ENCODE measurements at regions of chr12 and their contacts with region 1.

Region 1: DNA sequence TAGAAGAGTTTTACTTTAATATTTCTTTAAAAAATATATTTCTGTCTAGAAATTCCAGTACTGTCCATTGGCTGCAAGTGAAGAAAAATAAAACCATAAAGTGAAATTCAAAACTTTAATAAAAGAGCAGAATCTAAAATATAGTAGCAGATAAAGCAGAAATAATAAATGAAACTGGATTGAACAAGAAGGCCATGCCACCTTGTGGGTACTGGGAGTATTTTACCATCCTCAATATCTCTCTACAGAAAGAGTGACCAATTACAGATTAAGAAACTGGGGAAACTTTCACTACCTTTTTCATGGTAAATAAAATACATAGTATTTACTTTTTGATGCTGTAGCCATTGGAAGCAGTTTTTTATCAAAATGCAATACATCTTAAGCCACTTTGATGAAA is 220.5 kb downstream of the BCAT1 start:
- DNase-seq: no peak
- H3K4me3 Mint-ChIP-seq: no peak overlapping the region
- H3K27ac Mint-ChIP-seq: no peak overlapping the region
- H3K4me1 Mint-ChIP-seq: peaks cover 19% of the 10 kb centered on the region
- H3K27me3 Mint-ChIP-seq: no peaks in the 10 kb centered on the region

Region 2: DNA sequence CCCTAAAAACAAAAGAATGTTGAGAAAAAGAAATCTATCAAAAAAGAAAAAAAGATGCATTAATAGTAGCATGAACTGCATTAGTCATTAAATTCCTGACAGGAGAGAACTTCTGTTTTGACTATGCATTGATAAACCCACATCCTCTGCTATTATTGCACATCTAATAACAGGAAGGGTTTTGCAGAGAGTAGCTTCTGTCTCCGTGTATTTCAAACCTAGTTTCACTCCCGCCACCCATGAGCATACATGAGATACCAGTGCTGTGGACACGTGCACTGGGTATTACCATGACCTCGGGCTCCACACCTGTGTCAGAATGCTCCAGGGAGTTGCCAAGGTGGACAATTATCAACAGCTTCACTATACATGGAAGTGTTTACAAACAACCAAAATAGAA is 329.8 kb before region 1 on chr12:
- intact Hi-C with region 1: no loop called
- DNase-seq: no peak
- H3K4me3 Mint-ChIP-seq: no peak overlapping the region
- H3K27ac Mint-ChIP-seq: no peak overlapping the region
- H3K4me1 Mint-ChIP-seq: no peaks in the 10 kb centered on the region
- H3K27me3 Mint-ChIP-seq: peaks cover 2% of the 10 kb centered on the region

Region 3: DNA sequence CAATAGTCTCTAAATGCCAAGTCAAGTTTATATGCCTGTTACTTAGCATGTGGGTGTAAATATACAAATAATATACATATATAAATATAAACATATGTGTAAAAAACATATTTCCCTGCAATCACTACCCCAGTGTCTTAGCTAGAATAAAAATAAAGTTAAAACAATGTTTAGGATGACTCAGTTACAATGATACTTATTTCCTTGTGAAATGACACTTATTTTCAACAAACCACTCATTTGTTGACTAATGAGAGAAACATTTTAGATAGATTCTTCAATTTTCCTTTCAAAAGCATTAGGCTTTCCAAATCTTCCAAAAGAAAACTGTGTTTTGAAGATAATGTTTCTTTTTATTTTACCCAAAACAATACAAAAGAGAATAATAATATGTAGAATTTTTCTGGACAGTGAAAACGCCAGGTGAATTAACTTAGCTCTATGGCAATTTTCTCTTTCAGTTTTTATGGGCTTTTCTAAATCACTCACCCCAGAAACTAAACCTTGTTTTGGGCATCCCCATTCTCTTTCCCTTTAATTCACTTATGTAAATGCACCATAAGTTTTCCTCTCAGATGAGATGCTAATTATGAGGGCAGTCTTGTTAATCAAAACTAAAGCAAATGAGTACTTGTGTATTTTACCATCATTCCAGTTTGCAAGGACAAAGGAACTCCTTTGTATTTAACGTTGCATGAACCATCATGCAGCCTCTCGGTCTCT is 245.3 kb before region 1 on chr12:
- intact Hi-C with region 1: no loop called
- DNase-seq: no peak
- H3K4me3 Mint-ChIP-seq: no peak overlapping the region
- H3K27ac Mint-ChIP-seq: no peak overlapping the region
- H3K4me1 Mint-ChIP-seq: no peaks in the 10 kb centered on the region
- H3K27me3 Mint-ChIP-seq: no peaks in the 10 kb centered on the region

Region 4: GRCh38 chr12:24596768-24597388 is 131.5 kb before region 1 on chr12:
- intact Hi-C with region 1: loop called (anchors 10 kb)
- DNase-seq: no peak
- H3K4me3 Mint-ChIP-seq: no peak overlapping the region
- H3K27ac Mint-ChIP-seq: no peak overlapping the region
- H3K4me1 Mint-ChIP-seq: peaks cover 3% of the 10 kb centered on the region
- H3K27me3 Mint-ChIP-seq: no peaks in the 10 kb centered on the region

Region 5: GRCh38 chr12:24688601-24689000 is 39.8 kb before region 1 on chr12:
- intact Hi-C with region 1: loop called (anchors 5 kb)
- DNase-seq: no peak
- H3K4me3 Mint-ChIP-seq: no peak overlapping the region
- H3K27ac Mint-ChIP-seq: no peak overlapping the region
- H3K4me1 Mint-ChIP-seq: no peaks in the 10 kb centered on the region
- H3K27me3 Mint-ChIP-seq: peaks cover 2% of the 10 kb centered on the region

Region 6: DNA sequence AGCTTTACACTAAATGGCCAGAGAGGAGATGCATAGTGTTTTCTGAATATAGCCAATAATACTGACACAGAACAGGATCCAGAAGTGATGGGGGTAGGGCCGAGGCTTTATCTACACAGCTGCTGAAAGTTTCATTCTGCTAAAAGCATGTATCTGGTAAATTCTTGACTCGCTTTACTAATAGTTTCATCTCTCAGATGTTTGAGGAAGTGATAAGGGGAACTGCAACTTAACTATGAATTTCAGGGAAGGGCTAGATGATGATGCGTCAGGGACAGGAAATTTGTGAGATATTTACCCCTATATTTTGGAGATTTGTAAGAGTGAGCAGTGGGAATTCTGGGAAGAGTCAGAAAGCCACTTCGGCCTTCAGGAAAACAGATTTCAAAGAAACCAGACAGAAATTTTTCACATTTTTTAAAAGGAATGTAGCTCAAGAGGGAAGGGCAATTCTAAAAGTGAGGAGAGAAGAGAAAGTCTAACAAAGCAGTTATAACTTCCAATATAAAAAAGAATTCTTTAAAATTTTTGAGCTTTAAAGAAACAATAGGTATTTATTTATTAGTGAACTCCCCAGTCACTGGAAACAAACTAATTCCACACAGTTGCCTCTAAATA is 22.5 kb before region 1 on chr12:
- intact Hi-C with region 1: loop called (anchors 2 kb)
- DNase-seq: no peak
- H3K4me3 Mint-ChIP-seq: no peak overlapping the region
- H3K27ac Mint-ChIP-seq: no peak overlapping the region
- H3K4me1 Mint-ChIP-seq: peaks cover 13% of the 10 kb centered on the region
- H3K27me3 Mint-ChIP-seq: no peaks in the 10 kb centered on the region

Measured in activated T-helper 2 cell treated with anti-CD3 and anti-CD28 coated beads, Interferon-gamma antibody, Interleukin-2, Interleukin-4, amounts not matched to agents 10 μg/mL and 5 μg/mL and 100 μg/mL, durations not matched to agents 14 hours and 24 hours and 36 hours (primary cell).